Right ventricle myocardium inferior (tissue), 1 donor: ENCODE measurements at regions of chr19 and their contacts with region 1.

Region 1: DNA sequence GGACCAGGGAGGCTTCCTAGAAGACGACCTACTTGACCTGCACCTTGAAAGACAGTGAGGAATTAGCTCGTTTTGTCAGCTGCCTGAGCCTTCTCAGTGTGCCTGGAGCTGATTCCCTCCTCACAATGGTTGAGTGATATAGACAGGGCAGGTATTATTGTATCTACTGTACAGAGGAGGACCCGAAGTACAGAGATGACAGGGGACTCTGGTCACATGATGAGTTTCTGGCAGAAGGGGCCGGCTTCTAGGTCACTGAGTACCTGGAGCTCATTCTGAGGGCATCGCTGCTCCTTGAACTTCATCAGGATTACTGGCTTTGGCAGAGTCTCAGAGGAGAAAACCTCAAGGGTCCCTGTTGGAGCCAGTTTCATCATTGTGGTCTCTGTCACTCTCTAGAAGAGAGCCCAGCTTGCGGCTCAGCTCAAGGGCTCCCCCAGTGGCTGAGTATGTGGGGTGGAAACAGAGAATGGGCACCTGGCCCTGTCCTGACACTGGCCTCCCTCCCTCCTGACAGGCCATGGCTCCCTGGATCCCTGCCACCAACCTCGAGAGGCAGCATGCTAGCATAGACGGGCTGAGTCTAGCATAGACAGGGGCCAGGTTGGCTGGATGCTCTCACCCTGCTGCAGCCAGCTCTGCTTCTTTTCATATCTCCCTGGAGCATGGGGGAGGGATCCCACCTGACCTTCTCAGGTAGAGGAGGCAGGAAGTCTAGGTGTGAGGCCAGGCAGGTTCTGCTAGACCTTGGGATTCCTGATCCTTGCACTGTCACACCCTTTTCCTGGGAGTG is 38.7 kb downstream of the NFIX start:
- DNase-seq: peak; percentile 89
- ATAC-seq: peak; percentile 70

Region 2: DNA sequence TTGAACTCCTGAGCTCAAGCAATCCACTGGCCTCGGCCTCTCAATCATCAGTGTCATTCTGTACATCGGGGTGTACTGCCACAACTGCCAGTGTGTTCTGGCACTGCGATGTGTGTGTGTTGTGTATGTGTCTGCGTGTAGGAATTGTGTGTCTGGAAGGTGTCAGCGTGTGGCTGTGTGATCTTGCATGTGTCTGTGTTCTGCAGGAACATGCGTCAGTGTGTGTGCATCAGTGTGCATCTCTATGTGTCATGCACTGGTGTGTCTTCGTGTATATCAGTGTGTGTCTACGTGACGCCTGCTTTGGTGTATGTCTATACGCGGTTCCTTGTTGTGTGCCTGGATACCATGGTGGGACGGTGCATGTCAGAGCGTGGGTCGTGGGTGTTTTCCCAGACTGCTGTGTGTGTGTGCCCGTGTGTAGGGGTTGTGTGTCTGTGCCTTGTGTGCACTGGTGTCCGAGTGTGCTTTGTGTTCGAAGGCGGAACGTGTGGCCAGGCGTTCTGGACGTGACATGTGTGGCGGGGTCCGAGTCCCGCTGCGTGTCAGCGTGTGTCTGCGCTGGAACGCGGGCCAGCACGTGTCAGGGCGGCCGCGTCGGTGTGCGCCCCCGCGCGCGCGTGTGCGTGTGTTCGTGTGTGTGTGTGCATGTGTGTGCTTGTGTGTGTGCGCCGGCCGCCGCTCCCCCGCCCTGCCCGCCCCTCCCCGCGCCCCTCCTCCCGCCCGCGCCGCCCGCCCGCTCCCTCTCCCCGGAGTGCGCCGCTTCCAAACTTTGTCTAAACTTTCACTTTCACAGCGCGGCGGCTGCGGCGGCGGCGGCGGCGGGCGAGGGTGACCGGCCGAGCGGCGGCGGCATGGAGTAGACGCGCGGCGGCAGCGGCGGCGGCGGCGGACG is 39.1 kb before region 1 on chr19 and contains the start of gene NFIX:
- intact Hi-C with region 1: loop called (anchors 5 kb)
- DNase-seq: peak; percentile 87
- ATAC-seq: peak; percentile 46
- total RNA-seq, gene NFIX: 159 TPM

Region 3: DNA sequence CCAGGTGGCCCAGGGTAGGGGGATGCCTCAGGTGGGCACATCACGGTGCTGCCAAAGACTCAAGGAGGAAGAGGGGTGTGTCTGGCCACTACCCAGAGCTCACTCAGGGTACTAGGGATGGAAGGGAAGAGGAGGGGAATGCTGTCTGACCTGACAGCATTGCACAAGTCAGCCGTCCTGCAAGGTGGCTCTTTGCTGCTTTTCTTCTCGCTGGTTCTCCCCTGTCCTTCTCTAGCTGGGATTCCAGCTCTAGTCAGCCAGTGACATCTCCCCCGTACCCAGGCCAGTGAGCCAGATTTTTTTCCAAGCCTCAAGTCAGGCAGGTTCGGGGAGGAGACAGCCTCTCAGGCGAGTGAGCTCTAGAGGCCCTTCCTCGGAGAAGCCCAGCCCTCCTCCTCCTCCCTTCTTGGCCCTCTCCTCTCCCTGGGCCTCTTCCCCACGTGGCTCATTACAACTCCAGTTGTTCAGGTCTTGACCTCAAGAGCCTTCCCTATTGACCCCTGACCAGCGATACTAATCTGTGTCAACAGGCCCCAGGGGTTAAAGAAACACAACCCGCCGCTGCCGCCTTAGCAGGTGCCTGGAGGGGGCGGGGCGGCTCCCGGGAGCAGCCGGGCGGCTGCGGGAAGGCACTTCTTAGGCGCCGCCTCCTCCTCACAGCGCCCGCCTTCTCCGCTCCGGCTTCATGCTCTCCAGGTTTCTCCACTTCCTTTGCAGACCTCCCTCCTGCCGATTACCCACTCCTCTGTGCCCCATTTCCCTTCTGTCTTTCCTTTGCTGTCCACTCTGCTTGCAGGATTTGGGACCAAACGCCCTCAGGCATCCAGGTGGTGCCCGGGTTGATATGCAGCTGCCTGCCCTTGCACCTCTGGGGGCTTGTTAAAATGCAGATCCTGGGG is 17.5 kb after region 1 on chr19:
- intact Hi-C with region 1: loop called (anchors 2 kb)
- DNase-seq: no peak
- ATAC-seq: no peak